Transverse colon (tissue), 4 donors: ENCODE measurements at regions of chr6 and their contacts with region 1.

Region 1: GRCh38 chr6:117346142-117346930 is 79.4 kb downstream of the ROS1 start:
- DNase-seq: no peak
- H3K4me3 ChIP-seq: no peak overlapping the region
- H3K27ac ChIP-seq: no peak overlapping the region
- H3K4me1 ChIP-seq: no peaks in the 10 kb centered on the region
- H3K27me3 ChIP-seq: no peaks in the 10 kb centered on the region
- CTCF ChIP-seq: peak; percentile 43 to 54 (median 50)
- EP300 ChIP-seq: no peak
- POLR2A ChIP-seq: no peak

Region 2: GRCh38 chr6:117110737-117111136 is 235.6 kb before region 1 on chr6:
- in situ Hi-C with region 1: no loop called
- intact Hi-C with region 1: no loop called
- DNase-seq: no peak
- H3K4me3 ChIP-seq: no peak overlapping the region
- H3K27ac ChIP-seq: no peak overlapping the region
- H3K4me1 ChIP-seq: no peaks in the 10 kb centered on the region
- H3K27me3 ChIP-seq: no peaks in the 10 kb centered on the region
- CTCF ChIP-seq: no peak
- EP300 ChIP-seq: no peak
- POLR2A ChIP-seq: no peak

Region 3: GRCh38 chr6:117487821-117488220 is 141.5 kb after region 1 on chr6:
- in situ Hi-C with region 1: no loop called
- intact Hi-C with region 1: no loop called
- DNase-seq: no peak
- H3K4me3 ChIP-seq: no peak overlapping the region
- H3K27ac ChIP-seq: peak overlapping the region in 3 of 4 donors; percentile 23 to 37 (median 25)
- H3K4me1 ChIP-seq: peaks cover 7 to 20% (median 9%) of the 10 kb centered on the region in 4 donors
- H3K27me3 ChIP-seq: no peaks in the 10 kb centered on the region
- CTCF ChIP-seq: no peak
- EP300 ChIP-seq: no peak
- POLR2A ChIP-seq: no peak

Region 4: GRCh38 chr6:117498159-117498558 is 151.8 kb after region 1 on chr6:
- in situ Hi-C with region 1: no loop called
- intact Hi-C with region 1: no loop called
- DNase-seq: no peak
- H3K4me3 ChIP-seq: no peak overlapping the region
- H3K27ac ChIP-seq: peak overlapping the region in 3 of 4 donors; percentile 16 to 34 (median 31)
- H3K4me1 ChIP-seq: peaks cover 0 to 36% (median 21%) of the 10 kb centered on the region in 4 donors
- H3K27me3 ChIP-seq: no peaks in the 10 kb centered on the region
- CTCF ChIP-seq: no peak
- EP300 ChIP-seq: no peak
- POLR2A ChIP-seq: no peak

Region 5: GRCh38 chr6:117555882-117556498 is 209.7 kb after region 1 on chr6:
- in situ Hi-C with region 1: loop called in 2 of 4 experiments (anchors 25 kb)
- intact Hi-C with region 1: no loop called
- DNase-seq: peak; percentile 49
- H3K4me3 ChIP-seq: no peak overlapping the region
- H3K27ac ChIP-seq: no peak overlapping the region
- H3K4me1 ChIP-seq: peaks cover 0 to 7% (median 0%) of the 10 kb centered on the region in 4 donors
- H3K27me3 ChIP-seq: no peaks in the 10 kb centered on the region
- CTCF ChIP-seq: peak; percentile 83 to 95 (median 85)
- EP300 ChIP-seq: no peak
- POLR2A ChIP-seq: no peak